Vagina (tissue), 2 donors: ENCODE measurements at regions of chr20 and their contacts with region 1.

Region 1: DNA sequence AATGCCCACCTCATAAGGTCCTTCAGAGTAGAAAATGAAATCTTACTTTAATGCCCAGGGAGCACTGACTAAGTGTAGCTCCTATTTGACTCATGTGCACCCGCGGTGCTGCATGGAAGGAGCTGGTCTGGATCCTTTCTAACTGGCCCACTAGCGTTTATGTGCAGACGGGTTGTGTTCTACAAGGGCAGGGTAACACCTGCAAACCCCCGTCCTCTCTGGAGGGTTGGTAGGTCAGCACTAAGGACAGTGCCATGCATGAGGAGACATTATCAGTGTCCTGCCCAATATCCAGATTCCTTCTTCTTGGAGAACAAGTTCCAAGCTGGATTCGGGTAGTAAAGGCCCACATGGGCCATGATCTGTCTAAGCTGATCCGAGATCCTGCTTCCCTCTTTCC is 140.3 kb downstream of the ANKRD60 start:
- DNase-seq: no peak
- H3K4me3 ChIP-seq: no peak overlapping the region
- H3K27ac ChIP-seq: no peak overlapping the region
- H3K4me1 ChIP-seq: no peaks in the 10 kb centered on the region
- H3K27me3 ChIP-seq: no peaks in the 10 kb centered on the region
- CTCF ChIP-seq: no peak
- POLR2A ChIP-seq: no peak

Region 2: DNA sequence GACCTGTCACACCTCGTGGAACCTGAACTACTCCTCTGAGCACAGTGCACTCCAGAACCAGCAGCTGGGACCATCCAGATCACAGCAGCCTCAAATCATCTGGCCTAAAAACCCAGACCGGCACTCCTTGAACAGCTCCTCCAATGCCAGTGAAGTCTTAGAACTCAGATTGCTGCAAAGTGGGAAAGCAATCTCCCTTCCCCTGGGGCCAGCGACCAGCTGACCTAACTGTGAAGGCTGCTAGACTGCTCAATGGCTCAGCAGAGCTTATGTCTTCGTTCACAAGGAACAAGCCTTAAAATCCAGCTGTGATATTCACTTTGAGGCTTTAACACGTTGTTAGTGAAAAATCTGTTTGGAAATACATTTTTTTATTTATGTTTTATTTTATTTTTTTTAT is 102.8 kb before region 1 on chr20:
- intact Hi-C with region 1: no loop called
- DNase-seq: no peak
- H3K4me3 ChIP-seq: no peak overlapping the region
- H3K27ac ChIP-seq: no peak overlapping the region
- H3K4me1 ChIP-seq: peaks cover 4% of the 10 kb centered on the region
- H3K27me3 ChIP-seq: no peaks in the 10 kb centered on the region
- CTCF ChIP-seq: no peak
- POLR2A ChIP-seq: no peak

Region 3: DNA sequence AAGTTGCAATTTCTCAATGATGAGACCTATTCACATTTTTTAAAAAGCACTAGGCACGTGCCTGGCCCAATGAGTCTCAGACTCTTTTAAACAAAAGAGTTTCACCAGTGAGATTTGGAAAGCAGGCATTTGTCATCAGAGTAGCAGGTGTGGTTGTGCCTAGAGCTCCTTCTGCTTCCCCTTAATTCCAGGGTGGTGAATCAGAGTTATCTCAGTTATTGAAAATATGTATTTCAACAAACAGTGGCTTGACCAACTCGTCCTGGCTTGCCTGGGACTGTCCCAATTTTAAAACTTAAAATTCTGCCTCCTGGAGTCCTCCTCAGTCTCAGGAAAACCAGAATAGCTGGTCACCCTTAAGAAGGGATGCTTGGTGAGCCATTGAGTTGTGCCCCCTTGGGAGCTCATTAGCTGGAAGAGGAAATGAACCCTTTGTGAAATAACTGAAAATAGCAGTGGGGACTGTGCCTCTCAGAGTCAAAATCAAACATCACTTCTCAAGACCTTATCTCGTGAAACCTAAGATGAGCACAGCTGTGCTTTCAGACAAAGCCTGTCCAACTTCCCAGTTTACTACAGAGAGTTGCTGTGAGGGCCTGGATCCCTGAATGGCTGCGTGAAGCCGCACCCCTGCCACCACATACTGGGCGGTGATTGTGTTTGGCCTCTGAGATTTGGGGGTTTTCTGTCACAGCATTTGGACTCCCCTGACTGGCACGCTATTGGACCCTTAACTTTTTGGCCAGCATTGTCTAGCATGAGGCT is 24.1 kb after region 1 on chr20:
- intact Hi-C with region 1: loop called (anchors 1 kb)
- DNase-seq: peak; percentile 67 to 76
- H3K4me3 ChIP-seq: no peak overlapping the region
- H3K27ac ChIP-seq: peak overlapping the region; percentile 29
- H3K4me1 ChIP-seq: peaks cover 14% of the 10 kb centered on the region
- H3K27me3 ChIP-seq: no peaks in the 10 kb centered on the region
- CTCF ChIP-seq: no peak
- POLR2A ChIP-seq: no peak

Region 4: GRCh38 chr20:58388882-58389323 is 300.8 kb after region 1 on chr20 and contains the start of gene VAPB:
- intact Hi-C with region 1: no loop called
- DNase-seq: peak in 1 of 2 donors; percentile 93
- H3K4me3 ChIP-seq: peak within 1 kb of the TSS; percentile 74 to 83
- H3K27ac ChIP-seq: peak within 1 kb of the TSS; percentile 80
- H3K4me1 ChIP-seq: peaks cover 42% of the 10 kb centered on the region
- H3K27me3 ChIP-seq: no peaks in the 10 kb centered on the region
- CTCF ChIP-seq: no peak
- POLR2A ChIP-seq: peak in 1 of 2 donors; percentile 80
- total RNA-seq, gene VAPB: 21.6 TPM